Endothelial cell of umbilical vein (primary cell): ENCODE measurements at regions of chr16 and their contacts with region 1.

Region 1: GRCh38 chr16:58418601-58419000 is 26.3 kb downstream of the GINS3 start:
- DNase-seq: peak; percentile 57
- H3K4me3 ChIP-seq: no peak overlapping the region
- H3K27ac ChIP-seq: no peak overlapping the region
- H3K4me1 ChIP-seq: peaks cover 5% of the 10 kb centered on the region
- H3K27me3 ChIP-seq: no peaks in the 10 kb centered on the region
- CTCF ChIP-seq: no peak
- POLR2A ChIP-seq: no peak

Region 2: DNA sequence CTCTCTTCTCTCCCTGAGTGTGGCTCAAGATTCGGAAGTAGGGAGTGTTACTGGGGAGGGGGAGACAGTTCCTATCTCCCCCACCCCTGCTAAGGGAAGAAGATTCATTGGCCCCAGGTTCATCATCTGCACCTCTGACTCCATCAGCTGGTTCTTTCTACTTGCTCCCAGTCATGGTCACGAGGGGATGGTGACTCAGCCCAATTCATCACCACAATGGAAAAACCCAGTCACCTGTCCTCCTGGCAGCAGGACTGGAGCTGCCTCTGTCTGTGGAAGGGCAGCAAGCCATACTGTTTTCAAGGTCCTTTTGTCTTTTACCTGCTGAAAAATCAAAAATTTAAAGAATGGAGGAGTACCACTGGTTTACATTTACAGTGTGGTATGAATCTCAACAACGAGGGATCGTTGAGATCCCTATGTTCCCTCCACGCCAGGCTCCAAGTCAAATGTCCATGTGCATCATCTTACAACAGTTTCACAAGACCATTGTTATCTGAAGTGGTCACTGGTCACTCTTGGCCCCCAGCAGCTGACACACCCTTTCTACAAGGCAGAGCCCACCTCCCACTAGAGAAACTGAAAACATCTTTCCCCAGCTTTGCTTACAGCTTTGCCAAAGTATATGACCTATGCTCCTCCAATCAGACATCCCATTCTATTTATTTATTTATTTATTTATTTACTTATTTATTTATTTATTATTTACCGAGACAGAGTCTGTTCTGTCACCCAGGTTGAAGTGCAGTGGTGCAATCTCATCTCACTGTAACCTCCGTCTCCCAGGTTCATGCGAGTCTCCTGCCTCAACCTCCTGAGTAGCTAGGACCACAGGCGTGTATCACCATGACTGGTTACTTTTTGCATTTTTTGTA is 41.0 kb after region 1 on chr16:
- CTCF ChIA-PET with region 1: no interaction called
- POLR2A ChIA-PET with region 1: no interaction called
- dilution Hi-C with region 1: no loop called
- intact Hi-C with region 1: loop called (anchors 5 kb)
- DNase-seq: peak; percentile 87
- H3K4me3 ChIP-seq: no peak overlapping the region
- H3K27ac ChIP-seq: no peak overlapping the region
- H3K4me1 ChIP-seq: peaks cover 32% of the 10 kb centered on the region
- H3K27me3 ChIP-seq: peaks cover 0 to 4% of the 10 kb centered on the region in 2 experiments
- CTCF ChIP-seq: no peak
- POLR2A ChIP-seq: no peak